HEK293 (cell line): ENCODE measurements at regions of chr6 and their contacts with region 1.

Region 1: GRCh38 chr6:27146706-27147505 is 100.6 kb upstream of the PRSS16 start:
- H3K4me3 ChIP-seq: peak overlapping the region; percentile 55
- H3K27ac ChIP-seq: peak overlapping the region; percentile 81; the same call in 1 of the 2 replicates
- H3K4me1 ChIP-seq: no peaks in the 10 kb centered on the region
- CTCF ChIP-seq: 0 out of 2 replicates have a peak, but pooled peaks have one; percentile 14

Region 2: DNA sequence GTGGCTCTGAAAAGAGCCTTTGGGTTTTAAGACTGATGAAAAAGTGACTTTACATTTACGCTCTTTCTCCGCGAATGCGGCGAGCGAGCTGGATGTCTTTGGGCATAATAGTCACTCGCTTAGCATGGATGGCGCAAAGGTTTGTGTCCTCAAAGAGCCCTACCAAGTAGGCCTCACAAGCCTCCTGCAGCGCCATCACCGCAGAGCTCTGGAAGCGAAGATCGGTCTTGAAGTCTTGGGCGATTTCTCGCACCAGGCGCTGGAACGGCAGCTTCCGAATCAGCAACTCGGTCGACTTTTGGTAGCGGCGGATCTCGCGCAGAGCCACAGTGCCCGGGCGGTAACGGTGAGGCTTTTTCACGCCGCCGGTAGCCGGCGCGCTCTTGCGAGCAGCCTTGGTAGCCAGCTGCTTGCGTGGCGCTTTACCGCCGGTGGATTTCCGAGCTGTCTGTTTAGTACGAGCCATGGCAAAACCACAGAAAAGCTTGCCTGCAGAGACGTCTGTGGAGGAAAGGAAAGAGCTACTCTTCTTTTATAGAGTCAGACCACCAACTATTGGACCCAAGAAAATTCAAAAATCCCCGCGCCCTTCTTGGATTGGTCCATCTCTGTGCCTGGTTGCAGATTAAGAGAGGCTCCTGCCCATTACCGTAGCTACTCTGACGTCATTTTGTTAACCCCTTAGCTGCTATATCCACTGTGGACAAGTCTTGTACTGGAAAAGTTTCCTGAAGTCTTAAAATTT is 1115.1 kb before region 1 on chr6:
- CTCF ChIA-PET with region 1: no interaction called
- POLR2A ChIA-PET with region 1: interaction called, 14 read pairs
- H3K4me3 ChIP-seq: peak overlapping the region; percentile 71
- H3K27ac ChIP-seq: peak overlapping the region; percentile 63
- H3K4me1 ChIP-seq: peaks cover 12% of the 10 kb centered on the region
- CTCF ChIP-seq: peak; percentile 85

Region 3: GRCh38 chr6:27132532-27133280 is 14.2 kb before region 1 on chr6:
- CTCF ChIA-PET with region 1: interaction called, 9 read pairs
- POLR2A ChIA-PET with region 1: interaction called, 338 read pairs
- H3K4me3 ChIP-seq: peak overlapping the region; percentile 71
- H3K27ac ChIP-seq: peak overlapping the region; percentile 95
- H3K4me1 ChIP-seq: peaks cover 10% of the 10 kb centered on the region
- CTCF ChIP-seq: no peak

Region 4: GRCh38 chr6:27177485-27178406 is 30.8 kb after region 1 on chr6:
- CTCF ChIA-PET with region 1: no interaction called
- POLR2A ChIA-PET with region 1: interaction called, 29 read pairs
- H3K4me3 ChIP-seq: peak overlapping the region; percentile 92
- H3K27ac ChIP-seq: peak overlapping the region; percentile 85
- H3K4me1 ChIP-seq: no peaks in the 10 kb centered on the region
- CTCF ChIP-seq: peak; percentile 75; the same call in 1 of the 2 replicates

Region 5: DNA sequence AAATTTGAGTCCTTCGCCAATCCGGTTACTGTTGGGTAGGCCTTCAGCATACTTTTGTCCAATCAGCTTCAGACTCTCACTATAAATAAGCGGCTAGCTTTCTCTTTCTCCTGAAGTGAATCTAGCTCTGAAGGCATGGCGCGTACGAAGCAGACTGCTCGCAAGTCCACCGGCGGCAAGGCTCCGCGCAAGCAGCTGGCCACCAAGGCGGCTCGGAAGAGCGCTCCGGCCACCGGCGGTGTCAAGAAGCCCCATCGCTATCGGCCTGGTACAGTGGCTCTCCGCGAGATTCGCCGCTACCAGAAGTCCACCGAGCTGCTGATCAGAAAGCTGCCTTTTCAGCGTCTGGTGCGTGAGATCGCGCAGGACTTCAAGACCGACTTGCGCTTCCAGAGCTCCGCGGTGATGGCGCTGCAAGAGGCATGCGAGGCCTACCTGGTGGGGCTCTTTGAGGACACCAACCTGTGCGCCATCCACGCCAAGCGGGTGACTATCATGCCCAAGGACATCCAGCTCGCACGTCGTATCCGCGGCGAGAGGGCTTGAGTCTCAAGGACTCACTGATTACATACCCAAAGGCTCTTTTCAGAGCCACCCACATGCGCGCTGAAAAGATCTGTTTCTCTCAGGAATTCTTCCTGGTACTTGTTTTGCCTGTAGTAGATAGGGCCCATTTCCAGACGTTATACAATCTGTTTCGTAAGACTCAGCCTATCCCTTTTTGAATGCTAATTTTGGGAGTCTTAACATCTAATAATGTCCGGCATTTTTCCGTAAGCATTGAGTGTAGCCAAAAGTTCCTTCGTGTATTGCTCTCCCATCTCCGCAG is 663.2 kb after region 1 on chr6:
- CTCF ChIA-PET with region 1: no interaction called
- POLR2A ChIA-PET with region 1: interaction called, 29 read pairs
- H3K4me3 ChIP-seq: peak overlapping the region; percentile 87
- H3K27ac ChIP-seq: peak overlapping the region; percentile 77
- H3K4me1 ChIP-seq: peaks cover 5% of the 10 kb centered on the region; the same call in 1 of the 2 replicates
- CTCF ChIP-seq: peak; percentile 9; the same call in 1 of the 2 replicates

Region 6: DNA sequence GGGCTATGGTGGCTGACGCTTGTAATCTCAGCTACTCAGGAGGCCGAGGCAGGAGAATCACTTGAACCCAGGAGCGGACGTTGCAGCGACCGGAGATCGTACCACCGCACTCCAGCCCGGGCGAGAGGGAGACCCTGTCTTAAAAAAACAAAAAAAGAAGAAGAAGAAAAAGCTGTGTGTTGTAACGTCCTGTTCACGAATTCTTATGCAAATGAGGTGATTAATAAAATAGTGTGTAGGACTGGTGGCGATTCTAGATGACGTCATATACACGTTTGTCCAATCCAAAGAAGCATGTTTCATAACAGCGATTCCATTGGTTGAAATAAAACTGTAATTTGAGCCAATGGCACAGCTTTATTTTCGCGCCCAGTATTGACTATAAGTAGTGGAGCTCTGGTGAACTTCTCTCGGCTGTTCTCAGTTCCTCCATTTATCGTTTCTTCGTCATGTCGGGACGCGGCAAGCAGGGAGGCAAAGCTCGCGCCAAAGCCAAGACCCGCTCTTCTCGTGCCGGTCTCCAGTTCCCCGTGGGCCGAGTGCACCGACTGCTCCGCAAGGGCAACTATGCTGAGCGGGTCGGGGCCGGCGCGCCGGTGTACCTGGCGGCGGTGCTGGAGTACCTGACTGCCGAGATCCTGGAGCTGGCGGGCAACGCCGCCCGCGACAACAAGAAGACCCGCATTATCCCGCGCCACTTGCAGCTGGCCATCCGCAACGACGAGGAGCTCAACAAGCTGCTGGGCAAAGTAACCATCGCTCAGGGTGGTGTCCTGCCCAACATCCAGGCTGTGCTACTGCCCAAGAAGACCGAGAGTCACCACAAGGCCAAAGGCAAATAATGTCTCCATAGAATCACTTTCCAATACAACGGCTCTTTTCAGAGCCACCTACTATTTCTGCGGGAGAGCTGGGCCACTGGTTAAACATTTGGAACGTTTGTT is 718.3 kb after region 1 on chr6:
- CTCF ChIA-PET with region 1: no interaction called
- POLR2A ChIA-PET with region 1: interaction called, 14 read pairs
- H3K4me3 ChIP-seq: peak overlapping the region; percentile 78
- H3K27ac ChIP-seq: peak overlapping the region; percentile 63
- H3K4me1 ChIP-seq: no peaks in the 10 kb centered on the region
- CTCF ChIP-seq: no peak

Region 7: DNA sequence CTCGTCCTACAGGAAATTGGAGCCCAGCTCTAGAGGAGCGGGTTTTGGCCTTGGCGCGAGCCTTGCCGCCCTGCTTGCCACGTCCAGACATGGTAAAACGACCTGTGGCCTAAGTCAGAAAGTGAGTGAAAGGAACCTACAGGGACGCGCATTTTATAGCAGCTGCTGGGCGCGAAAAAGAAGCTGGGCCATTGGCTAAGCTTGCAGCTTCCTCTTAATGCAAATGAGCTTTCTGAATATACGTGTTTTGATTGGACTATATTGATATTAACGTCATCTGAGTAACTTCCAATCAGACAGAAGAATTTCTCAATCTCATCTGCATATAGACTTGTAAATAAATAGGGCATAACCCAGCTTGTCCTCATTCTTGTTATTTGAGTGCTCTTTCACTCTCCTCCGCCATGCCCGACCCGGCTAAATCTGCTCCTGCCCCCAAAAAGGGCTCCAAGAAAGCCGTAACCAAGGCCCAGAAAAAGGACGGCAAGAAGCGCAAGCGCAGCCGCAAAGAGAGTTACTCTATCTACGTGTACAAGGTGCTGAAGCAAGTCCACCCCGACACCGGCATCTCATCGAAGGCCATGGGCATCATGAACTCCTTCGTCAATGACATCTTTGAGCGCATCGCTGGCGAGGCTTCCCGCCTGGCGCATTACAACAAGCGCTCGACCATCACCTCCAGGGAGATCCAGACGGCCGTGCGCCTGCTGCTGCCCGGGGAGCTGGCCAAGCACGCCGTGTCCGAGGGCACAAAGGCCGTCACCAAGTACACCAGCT is 746.3 kb after region 1 on chr6:
- CTCF ChIA-PET with region 1: no interaction called
- POLR2A ChIA-PET with region 1: interaction called, 46 read pairs
- H3K4me3 ChIP-seq: peak overlapping the region; percentile 56
- H3K27ac ChIP-seq: peak overlapping the region; percentile 67; the same call in 1 of the 2 replicates
- H3K4me1 ChIP-seq: no peaks in the 10 kb centered on the region
- CTCF ChIP-seq: no peak